ENCODE measurements at regions of chr1 and their contacts with region 1.

Region 1: GRCh38 chr1:7690076-7690475 is 81.0 kb upstream of the VAMP3 start:
- DNase-seq: no peak
- ATAC-seq: no peak
- H3K4me3 ChIP-seq: no peak overlapping the region
- H3K27ac ChIP-seq: no peak overlapping the region
- H3K4me1 ChIP-seq: no peaks in the 10 kb centered on the region
- H3K27me3 ChIP-seq: no peaks in the 10 kb centered on the region
- CTCF ChIP-seq: no peak

Region 2: DNA sequence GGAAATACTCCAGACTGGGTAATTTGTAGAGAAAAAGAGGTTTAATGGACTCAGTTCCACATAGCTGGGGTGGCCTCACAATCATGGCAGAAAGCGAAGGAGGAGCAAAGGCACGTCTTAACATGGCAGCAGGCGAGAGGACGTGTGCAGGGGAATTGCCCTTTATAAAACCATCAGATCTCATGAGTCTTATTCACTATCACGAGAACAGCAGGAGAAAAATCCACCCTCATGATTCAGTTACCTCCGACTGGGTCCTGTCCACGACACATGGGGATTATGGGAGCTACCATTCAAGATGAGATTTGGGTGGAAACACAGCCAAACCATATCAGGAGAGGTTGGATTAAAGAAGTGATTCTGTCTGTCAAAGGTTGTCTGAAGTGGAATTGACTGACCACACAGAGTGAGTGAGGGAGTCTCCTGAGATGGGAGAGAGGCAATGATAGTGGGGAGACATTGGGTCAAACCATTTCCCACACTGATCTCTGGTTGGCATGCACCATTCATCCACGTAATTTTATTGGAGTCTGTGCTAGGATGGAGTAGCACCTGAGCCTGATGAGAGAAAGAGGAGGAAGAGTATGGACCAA is 22.8 kb after region 1 on chr1:
- CTCF ChIA-PET with region 1: no interaction called
- POLR2A ChIA-PET with region 1: no interaction called
- in situ Hi-C with region 1: no loop called
- intact Hi-C with region 1: loop called (anchors 1 kb)
- DNase-seq: no peak
- ATAC-seq: no peak
- H3K4me3 ChIP-seq: no peak overlapping the region
- H3K27ac ChIP-seq: no peak overlapping the region
- H3K4me1 ChIP-seq: no peaks in the 10 kb centered on the region
- H3K27me3 ChIP-seq: peaks cover 2% of the 10 kb centered on the region; the same call in 1 of the 2 replicates
- CTCF ChIP-seq: no peak

Region 3: DNA sequence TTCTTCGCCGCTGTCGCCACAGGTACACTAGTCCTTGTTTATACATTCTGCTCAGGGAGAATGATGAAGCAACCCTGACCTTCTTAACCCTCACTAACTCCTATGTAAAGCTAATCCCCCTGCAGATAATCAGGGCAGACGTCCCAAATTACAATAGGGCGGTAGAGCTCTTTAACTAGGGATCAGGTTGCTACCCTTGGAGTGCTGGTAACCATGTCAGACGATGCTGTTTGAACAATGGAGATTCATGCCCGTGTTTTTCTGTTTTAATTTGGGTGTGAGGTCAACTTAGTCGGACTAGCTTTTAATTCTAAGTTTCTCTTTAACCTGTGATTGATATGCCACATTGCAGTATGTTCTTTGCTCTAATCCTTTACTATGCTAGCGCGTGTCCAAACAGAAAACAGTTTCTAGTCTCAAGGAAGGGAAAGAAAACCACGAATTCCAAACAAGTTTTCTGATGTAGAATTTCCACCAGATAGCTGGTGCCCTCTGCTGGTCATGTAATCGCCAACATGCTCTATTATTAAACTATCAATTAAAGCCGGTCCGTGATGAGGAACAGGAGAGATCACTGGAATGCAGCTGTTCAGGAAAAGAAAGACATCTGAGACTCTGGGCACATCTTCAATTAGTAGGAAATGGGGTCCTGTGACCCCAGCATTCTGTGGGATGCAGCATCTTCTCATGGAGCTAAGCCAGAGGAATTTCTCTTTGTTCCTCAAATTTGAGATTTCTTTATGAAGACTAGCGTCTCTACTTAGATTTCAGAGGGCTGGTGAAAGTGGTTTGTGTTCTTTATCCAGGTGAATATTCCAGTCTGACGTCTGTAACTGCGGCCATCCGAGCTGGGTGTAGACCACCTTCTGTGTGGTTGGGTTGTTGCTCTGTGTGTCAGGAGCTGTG is 62.7 kb after region 1 on chr1:
- CTCF ChIA-PET with region 1: interaction called, 13 read pairs
- POLR2A ChIA-PET with region 1: no interaction called
- in situ Hi-C with region 1: no loop called
- intact Hi-C with region 1: no loop called
- DNase-seq: peak; percentile 50
- ATAC-seq: peak; percentile 84
- H3K4me3 ChIP-seq: peak overlapping the region; percentile 2 to 21; a peak in 2 of 4 replicates
- H3K27ac ChIP-seq: no peak overlapping the region
- H3K4me1 ChIP-seq: peaks cover 3% of the 10 kb centered on the region; the same call in 1 of the 2 replicates
- H3K27me3 ChIP-seq: no peaks in the 10 kb centered on the region
- CTCF ChIP-seq: peak; percentile 87